B cell (primary cell): ENCODE measurements at regions of chr1 and their contacts with region 1.

Region 1: DNA sequence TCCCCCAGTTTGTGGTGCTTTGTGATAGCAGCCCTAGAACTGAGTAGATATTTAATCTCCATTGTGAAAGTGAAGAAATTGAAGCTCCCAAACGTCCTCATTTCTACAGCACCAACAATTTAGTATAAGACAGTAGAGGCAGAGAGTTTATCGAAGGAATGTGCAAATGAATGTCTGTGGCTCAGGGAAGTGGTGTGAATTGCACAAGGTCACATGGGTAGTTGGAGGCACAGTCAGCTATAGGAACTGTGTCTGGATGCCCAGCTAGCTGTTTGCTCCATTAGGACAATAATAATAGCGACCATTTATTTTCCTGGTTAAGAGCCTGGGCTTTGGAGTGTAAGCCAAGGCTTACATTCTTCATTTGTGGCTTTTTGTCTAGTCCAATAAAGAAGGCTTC is 144.4 kb upstream of the USP24 start:
- DNase-seq: no peak
- ATAC-seq: no peak
- H3K4me3 ChIP-seq: no peak overlapping the region
- H3K4me3 Mint-ChIP-seq: no peak overlapping the region
- H3K27ac ChIP-seq: no peak overlapping the region
- H3K27ac Mint-ChIP-seq: no peak overlapping the region
- H3K4me1 ChIP-seq: no peaks in the 10 kb centered on the region
- H3K4me1 Mint-ChIP-seq: no peaks in the 10 kb centered on the region
- H3K27me3 ChIP-seq: no peaks in the 10 kb centered on the region
- H3K27me3 Mint-ChIP-seq: peaks cover 45% of the 10 kb centered on the region
- CTCF ChIP-seq: no peak

Region 2: DNA sequence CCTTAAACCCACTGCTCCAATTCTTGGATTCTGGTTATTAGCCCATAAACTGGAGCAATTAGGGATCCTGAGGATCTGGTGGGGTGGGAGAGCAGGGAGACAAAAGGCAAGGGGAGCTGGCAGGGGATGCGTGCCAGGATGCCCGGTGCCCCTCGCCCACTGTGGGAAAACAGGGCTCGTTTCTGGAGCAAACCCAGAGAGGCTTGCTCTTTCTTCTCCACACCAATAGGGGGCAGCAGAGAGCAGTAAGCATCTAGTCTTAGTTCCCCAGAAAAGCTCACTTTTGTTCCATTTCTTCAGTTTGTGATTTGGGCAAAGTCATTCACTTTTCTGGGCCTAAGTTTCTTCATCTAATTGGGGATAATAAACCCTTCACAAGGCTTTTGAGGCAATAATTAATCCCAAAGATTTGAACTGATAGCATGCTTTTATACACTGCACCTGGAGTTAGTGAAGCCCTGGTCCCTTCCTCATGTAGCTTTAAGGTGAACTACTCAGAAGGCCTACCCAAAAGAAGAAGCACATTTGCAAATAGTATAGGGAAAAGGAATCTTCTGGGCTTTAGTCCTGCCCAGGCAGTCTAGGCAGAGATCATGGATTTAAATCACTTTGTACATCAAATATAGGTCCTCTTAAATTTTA is 16.1 kb after region 1 on chr1:
- CTCF ChIA-PET with region 1: interaction called, 23 read pairs
- POLR2A ChIA-PET with region 1: no interaction called
- intact Hi-C with region 1: no loop called
- DNase-seq: peak; percentile 52
- ATAC-seq: peak; percentile 45
- H3K4me3 ChIP-seq: no peak overlapping the region
- H3K4me3 Mint-ChIP-seq: no peak overlapping the region
- H3K27ac ChIP-seq: no peak overlapping the region
- H3K27ac Mint-ChIP-seq: no peak overlapping the region
- H3K4me1 ChIP-seq: no peaks in the 10 kb centered on the region
- H3K4me1 Mint-ChIP-seq: no peaks in the 10 kb centered on the region
- H3K27me3 ChIP-seq: no peaks in the 10 kb centered on the region
- H3K27me3 Mint-ChIP-seq: peaks cover 4% of the 10 kb centered on the region
- CTCF ChIP-seq: peak; percentile 89